HAP-1 (cell line): ENCODE measurements at regions of chr7 and their contacts with region 1.

Region 1: GRCh38 chr7:142782922-142783900 is 12.4 kb downstream of the PRSS2 start:
- DNase-seq: peak; percentile 87 to 93
- H3K4me3 ChIP-seq: peak overlapping the region; percentile 20
- H3K4me1 ChIP-seq: no peaks in the 10 kb centered on the region; the same call in 1 of the 2 replicates
- H3K27me3 ChIP-seq: no peaks in the 10 kb centered on the region

Region 2: GRCh38 chr7:142632291-142633134 is 150.7 kb before region 1 on chr7:
- in situ Hi-C with region 1: loop called (anchors 10 kb)
- DNase-seq: peak; percentile 29 to 72
- H3K4me3 ChIP-seq: no peak overlapping the region
- H3K4me1 ChIP-seq: no peaks in the 10 kb centered on the region
- H3K27me3 ChIP-seq: peaks cover 15% of the 10 kb centered on the region

Region 3: GRCh38 chr7:142689439-142690120 is 93.6 kb before region 1 on chr7:
- in situ Hi-C with region 1: loop called (anchors 5 kb)
- DNase-seq: no peak
- H3K4me3 ChIP-seq: no peak overlapping the region
- H3K4me1 ChIP-seq: no peaks in the 10 kb centered on the region
- H3K27me3 ChIP-seq: no peaks in the 10 kb centered on the region